Panc1 (cell line): ENCODE measurements at regions of chr13 and their contacts with region 1.

Region 1: GRCh38 chr13:113129921-113130750 is 7.5 kb downstream of the F10 start:
- DNase-seq: no peak
- ATAC-seq: no peak
- H3K4me3 ChIP-seq: no peak overlapping the region
- H3K27ac ChIP-seq: no peak overlapping the region
- H3K4me1 ChIP-seq: no peaks in the 10 kb centered on the region
- H3K27me3 ChIP-seq: no peaks in the 10 kb centered on the region
- CTCF ChIP-seq: no peak

Region 2: DNA sequence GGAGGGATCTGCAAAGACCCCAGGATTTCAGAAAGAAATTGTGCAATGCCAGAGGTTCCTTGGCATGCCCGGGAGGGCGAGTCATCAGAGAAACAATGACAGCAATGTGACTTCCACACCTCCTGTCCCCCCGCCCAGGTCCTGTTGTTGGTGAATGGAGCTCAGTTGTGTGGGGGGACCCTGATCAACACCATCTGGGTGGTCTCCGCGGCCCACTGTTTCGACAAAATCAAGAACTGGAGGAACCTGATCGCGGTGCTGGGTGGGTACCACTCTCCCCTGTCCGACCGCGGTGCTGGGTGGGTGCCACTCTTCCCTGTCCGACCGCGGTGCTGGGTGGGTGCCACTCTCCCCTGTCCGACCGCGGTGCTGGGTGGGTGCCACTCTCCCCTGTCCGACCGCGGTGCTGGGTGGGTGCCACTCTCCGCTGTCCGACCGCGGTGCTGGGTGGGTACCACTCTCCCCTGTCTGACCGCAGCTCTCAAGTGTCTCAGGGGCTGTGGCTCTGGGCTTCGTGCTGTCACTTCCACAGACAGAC is 12.7 kb before region 1 on chr13:
- CTCF ChIA-PET with region 1: interaction called, 3 read pairs
- POLR2A ChIA-PET with region 1: interaction called, 11 read pairs
- in situ Hi-C with region 1: no loop called
- intact Hi-C with region 1: no loop called
- DNase-seq: no peak
- ATAC-seq: no peak
- H3K4me3 ChIP-seq: no peak overlapping the region
- H3K27ac ChIP-seq: no peak overlapping the region
- H3K4me1 ChIP-seq: no peaks in the 10 kb centered on the region
- H3K27me3 ChIP-seq: no peaks in the 10 kb centered on the region
- CTCF ChIP-seq: no peak